MCF 10A (cell line): ENCODE measurements at regions of chr3 and their contacts with region 1.

Region 1: DNA sequence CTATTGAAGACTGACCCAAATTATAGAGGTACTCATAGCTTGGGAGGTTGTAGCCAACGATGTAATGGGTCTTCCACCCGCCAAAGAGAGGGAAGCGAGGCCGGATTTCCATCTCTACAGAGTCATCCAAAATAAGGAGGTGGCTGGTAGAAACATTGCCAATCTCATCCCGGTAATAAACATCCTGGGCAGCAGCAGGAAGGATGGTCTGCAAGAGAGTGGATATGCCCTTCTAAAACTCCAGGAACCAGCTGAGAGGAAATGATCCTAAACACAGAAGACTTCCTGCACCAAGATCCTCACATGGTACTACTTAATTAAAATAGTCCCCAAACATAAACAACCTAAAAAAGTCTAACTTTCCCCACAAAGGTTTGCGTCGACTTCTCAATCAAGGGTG is 20.7 kb downstream of the RPN1 start:
- DNase-seq: no peak
- H3K4me3 Mint-ChIP-seq: no peak overlapping the region
- H3K27ac Mint-ChIP-seq: no peak overlapping the region
- H3K4me1 Mint-ChIP-seq: peaks cover 5% of the 10 kb centered on the region
- H3K27me3 Mint-ChIP-seq: no peaks in the 10 kb centered on the region
- CTCF ChIP-seq: no peak

Region 2: GRCh38 chr3:128617557-128618397 is 12.2 kb before region 1 on chr3:
- CTCF ChIA-PET with region 1: interaction called, 13 read pairs
- POLR2A ChIA-PET with region 1: interaction called, 7 read pairs
- intact Hi-C with region 1: no loop called
- DNase-seq: peak; percentile 81
- H3K4me3 Mint-ChIP-seq: peak overlapping the region; percentile 90
- H3K27ac Mint-ChIP-seq: peak overlapping the region; percentile 96
- H3K4me1 Mint-ChIP-seq: peaks cover 18% of the 10 kb centered on the region
- H3K27me3 Mint-ChIP-seq: no peaks in the 10 kb centered on the region
- CTCF ChIP-seq: peak; percentile 64